ENCODE measurements at regions of chr7 and their contacts with region 1.

Region 1: GRCh38 chr7:108246227-108246837 is 116.2 kb upstream of the LAMB4 start:
- DNase-seq: peak; percentile 82 to 97 (median 86)
- ATAC-seq: peak; percentile 99
- H3K4me3 ChIP-seq: no peak overlapping the region
- H3K27ac ChIP-seq: peak overlapping the region; percentile 92
- H3K4me1 ChIP-seq: peaks cover 11 to 31% of the 10 kb centered on the region in 2 experiments
- H3K27me3 ChIP-seq: no peaks in the 10 kb centered on the region
- CTCF ChIP-seq: peak in 2 of 3 experiments; percentile 41 to 74; a peak in 4 of 6 replicates
- EP300 ChIP-seq: peak; percentile 91
- POLR2A ChIP-seq: peak; percentile 76
- RAD21 ChIP-seq: peak; percentile 59 to 78

Region 2: GRCh38 chr7:108211382-108212201 is 34.7 kb before region 1 on chr7:
- CTCF ChIA-PET with region 1: no interaction called
- POLR2A ChIA-PET with region 1: no interaction called
- in situ Hi-C with region 1: no loop called
- intact Hi-C with region 1: loop called (anchors 1 kb)
- DNase-seq: peak; percentile 60 to 94 (median 68)
- ATAC-seq: peak; percentile 97
- H3K4me3 ChIP-seq: no peak overlapping the region
- H3K27ac ChIP-seq: peak overlapping the region; percentile 83
- H3K4me1 ChIP-seq: peaks cover 8 to 9% of the 10 kb centered on the region in 2 experiments; a peak in 4 of 5 replicates
- H3K27me3 ChIP-seq: no peaks in the 10 kb centered on the region
- CTCF ChIP-seq: no peak
- EP300 ChIP-seq: peak; percentile 84
- POLR2A ChIP-seq: no peak
- RAD21 ChIP-seq: peak in 1 of 2 experiments; percentile 19; a peak in 1 of 4 replicates

Region 3: GRCh38 chr7:108235451-108236061 is 10.8 kb before region 1 on chr7:
- CTCF ChIA-PET with region 1: no interaction called
- POLR2A ChIA-PET with region 1: interaction called, 29 read pairs
- in situ Hi-C with region 1: no loop called
- intact Hi-C with region 1: no loop called
- DNase-seq: peak in 2 of 4 experiments; percentile 77 to 86
- ATAC-seq: peak; percentile 85
- H3K4me3 ChIP-seq: no peak overlapping the region
- H3K27ac ChIP-seq: peak overlapping the region; percentile 75
- H3K4me1 ChIP-seq: peaks cover 8 to 45% of the 10 kb centered on the region in 2 experiments; a peak in 4 of 5 replicates
- H3K27me3 ChIP-seq: no peaks in the 10 kb centered on the region
- CTCF ChIP-seq: no peak
- EP300 ChIP-seq: peak; percentile 90; the same call in 1 of the 2 replicates
- POLR2A ChIP-seq: no peak
- RAD21 ChIP-seq: no peak

Measured in K562 (cell line).